ENCODE measurements at regions of chr17 and their contacts with region 1.

Region 1: GRCh38 chr17:82545071-82545462 is 25.5 kb downstream of the FOXK2 start:
- DNase-seq: no peak
- ATAC-seq: no peak
- H3K4me3 ChIP-seq: no peak overlapping the region
- H3K4me3 Mint-ChIP-seq: no peak overlapping the region
- H3K27ac ChIP-seq: no peak overlapping the region
- H3K27ac Mint-ChIP-seq: no peak overlapping the region
- H3K4me1 ChIP-seq: peaks cover 5 to 22% of the 10 kb centered on the region in 2 donors
- H3K4me1 Mint-ChIP-seq: peaks cover 51% of the 10 kb centered on the region
- H3K27me3 ChIP-seq: no peaks in the 10 kb centered on the region
- H3K27me3 Mint-ChIP-seq: no peaks in the 10 kb centered on the region
- CTCF ChIP-seq: no peak

Region 2: GRCh38 chr17:82351716-82352488 is 193.2 kb before region 1 on chr17:
- CTCF ChIA-PET with region 1: interaction called, 40 read pairs
- POLR2A ChIA-PET with region 1: interaction called, 8 read pairs
- intact Hi-C with region 1: no loop called
- DNase-seq: peak; percentile 89
- ATAC-seq: peak; percentile 90
- H3K4me3 ChIP-seq: no peak overlapping the region
- H3K4me3 Mint-ChIP-seq: no peak overlapping the region
- H3K27ac ChIP-seq: no peak overlapping the region
- H3K27ac Mint-ChIP-seq: no peak overlapping the region
- H3K4me1 ChIP-seq: peaks cover 10 to 14% of the 10 kb centered on the region in 2 donors
- H3K4me1 Mint-ChIP-seq: peaks cover 5% of the 10 kb centered on the region
- H3K27me3 ChIP-seq: peaks cover 0 to 27% (median 6%) of the 10 kb centered on the region in 4 experiments
- H3K27me3 Mint-ChIP-seq: peaks cover 13% of the 10 kb centered on the region
- CTCF ChIP-seq: peak; percentile 97

Measured in B cell (primary cell).